Right lobe of liver (tissue), 6 donors: ENCODE measurements at regions of chr17 and their contacts with region 1.

Region 1: DNA sequence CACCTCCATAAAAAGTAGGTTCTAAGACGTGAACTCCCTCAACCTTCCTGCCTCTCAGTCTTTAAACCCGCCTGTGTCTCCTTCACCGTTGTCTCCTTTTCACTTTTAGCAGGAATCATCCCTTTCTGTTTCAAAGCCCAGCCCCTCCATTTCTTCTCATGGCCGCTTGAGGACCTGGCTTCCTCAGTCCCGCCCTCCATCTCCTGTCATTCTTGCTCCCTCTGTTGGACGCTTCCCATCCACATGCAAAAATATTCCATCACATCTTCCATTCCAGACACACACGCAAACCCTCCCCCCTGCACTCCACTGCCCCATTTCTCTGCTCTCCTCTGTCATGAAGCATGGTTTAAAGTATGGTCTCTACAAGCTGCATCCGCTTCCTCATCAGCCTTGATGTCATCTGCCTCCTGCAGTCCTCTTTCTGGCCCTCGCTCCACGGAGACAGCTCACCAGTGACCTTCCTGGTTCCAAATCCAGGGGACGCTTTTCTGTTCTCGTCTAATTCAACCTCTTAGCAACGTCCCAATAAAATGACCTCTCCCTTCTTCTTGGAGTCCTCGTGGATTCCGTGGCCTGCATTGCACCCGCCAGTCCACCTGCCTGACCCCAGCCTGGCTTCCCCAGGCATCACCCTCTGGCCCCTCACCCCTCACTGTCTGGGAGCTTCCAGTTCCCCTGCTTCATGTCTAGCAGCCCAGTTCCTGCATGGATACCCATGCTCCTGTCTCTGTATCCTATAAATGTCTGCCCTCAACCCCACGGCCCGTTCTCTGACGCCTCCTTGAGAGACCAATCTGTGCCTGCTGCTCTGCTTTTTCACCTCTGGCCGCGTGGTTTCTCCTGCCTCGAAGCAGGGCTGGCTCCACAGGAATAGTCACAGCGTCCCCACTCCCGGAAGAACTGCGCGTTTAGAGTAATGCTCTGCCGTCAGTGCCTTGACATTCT is 26.2 kb downstream of the ANKRD40 start:
- DNase-seq: peak in 1 of 3 donors; percentile 26
- ATAC-seq: peak in 1 of 4 donors; percentile 4
- H3K4me3 ChIP-seq: no peak overlapping the region
- H3K27ac ChIP-seq: no peak overlapping the region
- H3K4me1 ChIP-seq: peaks cover 3 to 56% (median 23%) of the 10 kb centered on the region in 4 donors
- H3K27me3 ChIP-seq: no peaks in the 10 kb centered on the region
- CTCF ChIP-seq: peak; percentile 31 to 41 (median 34)
- POLR2A ChIP-seq: no peak

Region 2: GRCh38 chr17:50593321-50593720 is 88.2 kb before region 1 on chr17:
- intact Hi-C with region 1: no loop called
- DNase-seq: no peak
- ATAC-seq: no peak
- H3K4me3 ChIP-seq: no peak overlapping the region
- H3K27ac ChIP-seq: no peak overlapping the region
- H3K4me1 ChIP-seq: peaks cover 0 to 12% (median 0%) of the 10 kb centered on the region in 4 donors
- H3K27me3 ChIP-seq: no peaks in the 10 kb centered on the region
- CTCF ChIP-seq: no peak
- POLR2A ChIP-seq: no peak

Region 3: DNA sequence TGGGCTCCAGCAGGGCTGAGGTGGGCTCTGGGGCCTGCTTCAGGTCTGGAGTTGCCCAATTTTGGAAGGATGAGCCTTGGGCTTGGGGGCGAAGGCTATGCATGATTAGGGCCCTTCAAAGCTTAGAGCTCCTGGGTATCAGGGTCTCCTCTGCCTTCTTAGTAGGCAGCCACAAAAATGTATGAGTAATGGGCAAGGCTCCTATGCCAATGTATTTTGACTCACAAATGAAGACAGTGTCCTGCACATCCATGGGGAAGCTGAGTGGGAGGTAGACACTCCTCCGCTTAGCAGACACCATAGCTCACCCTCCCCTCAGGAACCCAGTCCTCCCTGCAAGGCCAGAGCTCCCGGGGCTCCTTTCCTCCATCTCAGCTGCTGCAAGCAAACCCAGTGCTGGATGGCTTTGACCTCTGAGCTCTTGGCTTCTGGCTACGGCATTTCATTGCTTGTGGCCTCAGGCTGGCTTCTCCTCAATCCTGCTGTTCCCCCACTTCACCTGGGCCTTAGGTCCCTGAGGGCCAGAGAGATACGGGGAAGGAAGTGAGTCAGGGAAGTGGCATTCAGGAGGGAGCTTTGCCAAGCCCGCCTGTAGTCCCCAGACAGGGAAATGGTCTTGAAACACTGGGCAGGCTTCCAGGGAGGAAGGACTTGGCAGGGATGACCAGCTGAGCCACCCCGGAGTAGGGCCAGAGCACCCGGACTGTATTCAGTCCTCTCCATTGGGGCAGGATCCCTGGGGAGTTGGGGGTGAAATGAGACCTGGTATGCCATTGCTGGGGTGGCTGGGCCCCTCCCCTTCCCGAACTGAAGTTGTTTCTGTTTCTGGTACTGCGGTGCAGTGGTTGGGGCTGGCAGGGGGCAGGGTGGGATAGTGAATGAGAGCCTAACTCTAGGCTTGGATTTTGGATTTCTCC is 42.4 kb before region 1 on chr17:
- intact Hi-C with region 1: loop called in 1 of 2 experiments (anchors 5 kb)
- DNase-seq: peak; percentile 88 to 95 (median 91)
- ATAC-seq: peak; percentile 44 to 56 (median 52)
- H3K4me3 ChIP-seq: peak overlapping the region in 1 of 3 donors; percentile 3
- H3K27ac ChIP-seq: peak overlapping the region; percentile 6 to 81 (median 47)
- H3K4me1 ChIP-seq: peaks cover 5 to 71% (median 38%) of the 10 kb centered on the region in 4 donors
- H3K27me3 ChIP-seq: no peaks in the 10 kb centered on the region
- CTCF ChIP-seq: no peak
- POLR2A ChIP-seq: peak; percentile 57